ENCODE measurements at regions of chr7 and their contacts with region 1.

Region 1: DNA sequence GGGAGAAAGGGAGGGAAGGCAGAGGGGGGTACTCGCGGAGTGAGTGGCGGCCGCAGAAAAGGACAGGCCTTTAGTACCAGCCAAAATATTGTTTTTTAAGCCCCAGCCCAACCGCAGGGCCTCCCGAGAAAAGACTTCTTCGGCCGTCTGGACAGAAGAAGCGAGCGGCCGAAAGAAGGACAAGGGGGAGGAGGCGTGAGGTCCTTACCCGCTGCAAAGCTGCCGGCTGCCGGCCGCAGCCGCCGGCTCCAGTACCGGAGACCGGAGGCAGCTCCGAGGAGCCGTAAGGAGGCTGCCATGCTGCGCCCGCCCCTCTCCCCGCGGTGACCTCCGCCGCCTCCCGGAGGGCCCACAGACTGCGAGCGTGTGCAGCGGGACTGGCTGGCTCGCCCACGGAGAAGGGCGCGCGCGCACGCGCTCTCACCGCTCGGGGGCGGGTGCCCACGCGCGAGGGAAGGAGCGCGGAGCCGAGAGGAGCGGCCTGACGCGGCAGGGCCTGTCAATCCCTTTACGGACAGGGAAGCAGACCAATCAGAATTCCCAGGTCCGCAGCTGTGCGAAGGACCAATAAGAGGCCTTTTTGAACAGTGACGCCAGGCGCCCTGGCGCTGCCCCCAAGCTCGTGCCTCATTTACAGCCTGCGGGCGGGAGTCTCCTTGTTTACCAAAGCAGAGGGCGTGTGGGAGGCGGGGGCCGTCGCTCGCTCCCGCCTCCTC is at the start of gene HIBADH:
- DNase-seq: peak; percentile 98
- ATAC-seq: peak; percentile 95
- H3K4me3 ChIP-seq: peak within 1 kb of the TSS; percentile 76 to 97 (median 83)
- H3K4me3 Mint-ChIP-seq: peak within 1 kb of the TSS; percentile 88
- H3K27ac ChIP-seq: peak within 1 kb of the TSS; percentile 55 to 74
- H3K27ac Mint-ChIP-seq: peak within 1 kb of the TSS; percentile 92
- H3K4me1 ChIP-seq: peaks cover 10 to 12% of the 10 kb centered on the region in 2 donors
- H3K4me1 Mint-ChIP-seq: peaks cover 6% of the 10 kb centered on the region
- H3K27me3 ChIP-seq: no peaks in the 10 kb centered on the region
- H3K27me3 Mint-ChIP-seq: no peaks in the 10 kb centered on the region
- CTCF ChIP-seq: peak; percentile 15
- total RNA-seq, gene HIBADH: 14.1 and 15.0 TPM in 2 replicates

Region 2: DNA sequence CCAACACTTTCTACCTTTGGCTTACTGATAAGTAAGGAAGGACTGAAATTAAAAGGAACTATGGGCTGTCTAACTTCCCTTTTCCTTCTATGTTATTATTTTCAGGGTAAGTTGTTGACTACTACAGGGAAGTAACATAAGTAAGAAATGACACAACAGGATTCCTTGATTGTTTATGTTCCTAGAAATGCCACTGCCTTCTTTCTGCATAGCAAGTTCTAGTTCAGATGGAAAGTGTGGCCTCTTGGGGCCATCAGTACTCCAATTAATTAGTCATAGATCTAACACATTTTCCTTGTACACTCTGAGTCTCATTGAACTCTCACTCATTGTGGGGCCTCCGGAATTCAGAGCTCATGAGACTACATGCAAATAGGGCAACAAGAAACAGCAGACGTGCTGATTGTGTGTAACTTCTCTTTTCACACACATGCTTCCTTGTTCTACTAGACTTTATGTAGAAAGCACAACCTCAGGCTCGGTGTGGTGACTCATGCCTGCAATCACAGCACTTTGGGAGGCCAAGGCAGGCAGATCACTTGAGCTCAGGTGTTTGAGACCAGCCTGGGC is 35.3 kb after region 1 on chr7:
- CTCF ChIA-PET with region 1: interaction called, 3 read pairs
- POLR2A ChIA-PET with region 1: no interaction called
- intact Hi-C with region 1: loop called (anchors 5 kb)
- DNase-seq: peak; percentile 63
- ATAC-seq: peak; percentile 94
- H3K4me3 ChIP-seq: no peak overlapping the region
- H3K4me3 Mint-ChIP-seq: peak overlapping the region; percentile 60
- H3K27ac ChIP-seq: peak overlapping the region; percentile 64 to 73
- H3K27ac Mint-ChIP-seq: peak overlapping the region; percentile 87
- H3K4me1 ChIP-seq: peaks cover 14 to 15% of the 10 kb centered on the region in 2 donors
- H3K4me1 Mint-ChIP-seq: peaks cover 16% of the 10 kb centered on the region
- H3K27me3 ChIP-seq: peaks cover 0 to 5% (median 1%) of the 10 kb centered on the region in 4 experiments
- H3K27me3 Mint-ChIP-seq: peaks cover 4% of the 10 kb centered on the region
- CTCF ChIP-seq: no peak

Region 3: DNA sequence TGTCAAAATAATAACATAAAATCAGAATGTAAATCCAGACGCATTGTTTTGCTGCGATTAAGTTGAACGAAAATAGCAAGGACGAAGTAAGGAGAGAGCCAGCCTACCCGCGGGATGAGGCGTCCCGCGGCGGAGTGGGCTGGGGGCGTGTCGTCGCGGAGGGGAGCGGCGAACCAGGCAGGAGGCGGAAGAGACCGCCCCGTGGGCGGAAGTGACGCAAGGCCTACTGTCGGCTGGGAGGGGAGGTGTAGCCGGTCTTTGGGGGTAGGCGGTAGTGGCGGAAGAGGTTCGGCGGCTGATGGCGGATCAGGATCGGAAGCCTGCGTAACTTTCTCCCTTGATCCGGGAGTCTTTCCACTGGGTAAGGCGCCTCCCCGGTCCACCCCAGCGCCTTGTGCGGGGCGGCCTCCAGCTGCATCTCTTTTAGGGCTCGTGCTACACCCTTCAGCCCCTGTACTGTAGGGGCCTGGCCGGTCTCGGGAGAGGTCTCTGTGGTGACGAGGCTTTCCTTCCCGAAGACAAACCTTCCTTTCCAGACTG is 77.3 kb after region 1 on chr7 and contains the start of gene TAX1BP1:
- CTCF ChIA-PET with region 1: interaction called, 8 read pairs
- POLR2A ChIA-PET with region 1: interaction called, 15 read pairs
- intact Hi-C with region 1: loop called (anchors 1 kb)
- DNase-seq: peak; percentile 95
- ATAC-seq: peak; percentile 94
- H3K4me3 ChIP-seq: peak within 1 kb of the TSS; percentile 94 to 100 (median 98)
- H3K4me3 Mint-ChIP-seq: peak within 1 kb of the TSS; percentile 96
- H3K27ac ChIP-seq: peak within 1 kb of the TSS; percentile 93
- H3K27ac Mint-ChIP-seq: peak within 1 kb of the TSS; percentile 99
- H3K4me1 ChIP-seq: peaks cover 13 to 16% of the 10 kb centered on the region in 2 donors
- H3K4me1 Mint-ChIP-seq: peaks cover 33% of the 10 kb centered on the region
- H3K27me3 ChIP-seq: no peaks in the 10 kb centered on the region
- H3K27me3 Mint-ChIP-seq: no peaks in the 10 kb centered on the region
- CTCF ChIP-seq: no peak
- total RNA-seq, gene TAX1BP1: 94.7 and 104 TPM in 2 replicates

Region 4: GRCh38 chr7:27784393-27785053 is 121.9 kb after region 1 on chr7:
- CTCF ChIA-PET with region 1: interaction called, 3 read pairs
- POLR2A ChIA-PET with region 1: no interaction called
- intact Hi-C with region 1: loop called (anchors 2 kb)
- DNase-seq: peak; percentile 59
- ATAC-seq: peak; percentile 28
- H3K4me3 ChIP-seq: no peak overlapping the region
- H3K4me3 Mint-ChIP-seq: no peak overlapping the region
- H3K27ac ChIP-seq: no peak overlapping the region
- H3K27ac Mint-ChIP-seq: no peak overlapping the region
- H3K4me1 ChIP-seq: no peaks in the 10 kb centered on the region
- H3K4me1 Mint-ChIP-seq: no peaks in the 10 kb centered on the region
- H3K27me3 ChIP-seq: no peaks in the 10 kb centered on the region
- H3K27me3 Mint-ChIP-seq: no peaks in the 10 kb centered on the region
- CTCF ChIP-seq: peak; percentile 80

Region 5: GRCh38 chr7:28155019-28155660 is 492.5 kb after region 1 on chr7:
- CTCF ChIA-PET with region 1: no interaction called
- POLR2A ChIA-PET with region 1: no interaction called
- intact Hi-C with region 1: loop called (anchors 10 kb)
- DNase-seq: peak; percentile 79
- ATAC-seq: peak; percentile 78
- H3K4me3 ChIP-seq: peak overlapping the region in 4 of 5 experiments; percentile 23 to 58 (median 36)
- H3K4me3 Mint-ChIP-seq: peak overlapping the region; percentile 59
- H3K27ac ChIP-seq: peak overlapping the region; percentile 71 to 74
- H3K27ac Mint-ChIP-seq: peak overlapping the region; percentile 84
- H3K4me1 ChIP-seq: peaks cover 89 to 98% of the 10 kb centered on the region in 2 donors
- H3K4me1 Mint-ChIP-seq: peaks cover 88% of the 10 kb centered on the region
- H3K27me3 ChIP-seq: no peaks in the 10 kb centered on the region
- H3K27me3 Mint-ChIP-seq: no peaks in the 10 kb centered on the region
- CTCF ChIP-seq: no peak

Region 6: GRCh38 chr7:28410628-28411531 is 748.2 kb after region 1 on chr7:
- CTCF ChIA-PET with region 1: no interaction called
- POLR2A ChIA-PET with region 1: no interaction called
- intact Hi-C with region 1: no loop called
- DNase-seq: peak; percentile 69
- ATAC-seq: peak; percentile 48
- H3K4me3 ChIP-seq: peak overlapping the region; percentile 28 to 73 (median 61)
- H3K4me3 Mint-ChIP-seq: peak overlapping the region; percentile 87
- H3K27ac ChIP-seq: no peak overlapping the region
- H3K27ac Mint-ChIP-seq: no peak overlapping the region
- H3K4me1 ChIP-seq: peaks cover 31 to 39% of the 10 kb centered on the region in 2 donors
- H3K4me1 Mint-ChIP-seq: peaks cover 35% of the 10 kb centered on the region
- H3K27me3 ChIP-seq: peaks cover 0 to 52% (median 43%) of the 10 kb centered on the region in 4 experiments
- H3K27me3 Mint-ChIP-seq: peaks cover 76% of the 10 kb centered on the region
- CTCF ChIP-seq: no peak